ENCODE measurements at regions of chr5 and their contacts with region 1.

Region 1: DNA sequence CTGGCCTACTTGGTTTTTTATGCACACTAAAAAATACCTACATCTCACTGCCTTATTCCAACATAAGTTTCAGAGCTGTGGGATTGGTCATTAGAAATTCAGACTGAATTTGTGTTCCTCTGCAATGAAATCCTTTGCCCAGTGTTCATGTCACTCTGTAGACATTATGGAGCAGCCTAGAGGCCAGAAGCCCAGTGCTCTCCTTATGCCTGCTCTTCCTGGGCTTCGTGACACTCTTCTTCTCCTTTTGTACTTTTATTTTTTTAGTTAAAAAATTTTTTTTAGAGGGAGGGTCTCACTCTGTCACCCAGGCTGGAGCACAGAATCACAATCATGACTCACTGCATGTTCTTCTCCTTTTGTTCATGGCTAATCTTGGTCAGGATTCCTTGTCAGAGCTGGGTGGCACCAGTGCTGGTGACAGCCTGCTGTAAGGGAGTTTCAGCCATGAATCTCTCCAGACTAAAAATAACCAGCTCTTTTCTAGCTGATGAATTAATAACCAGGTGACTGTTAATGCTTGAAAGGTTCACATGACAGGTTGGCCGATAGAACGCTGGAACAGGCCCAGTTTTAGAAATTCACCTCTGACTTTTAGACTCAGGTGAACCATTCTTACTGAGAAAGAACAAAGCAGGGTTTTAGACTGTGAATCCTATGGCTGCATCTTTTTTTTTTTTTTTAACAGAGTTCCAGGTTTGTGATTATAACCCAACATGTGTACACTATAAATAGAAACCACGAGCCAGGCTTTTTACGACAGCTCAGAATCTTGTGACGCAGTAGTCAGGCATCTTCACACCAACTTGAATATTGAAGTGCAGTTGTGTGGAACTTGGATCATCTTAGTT is 34.1 kb upstream of the C5orf47 start:
- DNase-seq: no peak
- H3K4me3 ChIP-seq: no peak overlapping the region
- H3K27ac ChIP-seq: peak overlapping the region; percentile 88
- H3K4me1 ChIP-seq: peaks cover 83% of the 10 kb centered on the region
- H3K27me3 ChIP-seq: no peaks in the 10 kb centered on the region
- CTCF ChIP-seq: no peak

Region 2: DNA sequence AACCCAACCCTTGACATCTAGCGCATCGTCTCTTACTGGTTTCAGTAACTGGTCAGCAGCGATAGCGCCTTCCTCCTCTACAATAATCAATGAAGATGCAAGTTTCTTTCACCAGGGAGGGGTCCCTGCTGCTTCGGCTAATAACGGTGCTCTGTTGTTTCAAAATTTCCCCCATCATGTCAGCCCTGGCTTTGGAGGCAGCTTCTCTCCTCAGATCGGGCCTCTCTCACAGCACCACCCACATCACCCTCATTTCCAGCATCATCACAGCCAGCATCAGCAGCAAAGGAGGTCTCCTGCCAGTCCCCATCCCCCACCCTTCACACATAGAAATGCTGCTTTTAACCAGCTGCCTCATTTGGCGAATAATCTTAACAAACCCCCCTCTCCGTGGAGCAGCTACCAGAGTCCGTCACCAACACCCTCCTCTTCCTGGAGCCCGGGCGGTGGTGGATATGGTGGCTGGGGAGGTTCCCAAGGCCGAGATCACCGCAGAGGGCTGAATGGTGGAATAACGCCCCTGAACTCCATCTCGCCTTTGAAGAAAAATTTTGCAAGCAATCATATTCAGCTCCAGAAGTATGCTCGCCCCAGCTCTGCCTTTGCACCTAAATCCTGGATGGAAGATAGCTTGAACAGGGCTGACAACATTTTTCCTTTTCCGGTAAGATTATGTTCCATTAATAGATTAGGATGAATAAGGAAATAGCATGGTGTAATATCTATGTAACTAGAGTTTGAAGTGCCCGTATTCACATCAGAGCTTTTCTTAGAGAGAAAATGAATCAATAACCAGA is 64.5 kb before region 1 on chr5:
- intact Hi-C with region 1: loop called (anchors 10 kb)
- DNase-seq: peak; percentile 38
- H3K4me3 ChIP-seq: peak overlapping the region; percentile 90
- H3K27ac ChIP-seq: peak overlapping the region; percentile 91
- H3K4me1 ChIP-seq: peaks cover 76% of the 10 kb centered on the region
- H3K27me3 ChIP-seq: no peaks in the 10 kb centered on the region
- CTCF ChIP-seq: no peak

Region 3: DNA sequence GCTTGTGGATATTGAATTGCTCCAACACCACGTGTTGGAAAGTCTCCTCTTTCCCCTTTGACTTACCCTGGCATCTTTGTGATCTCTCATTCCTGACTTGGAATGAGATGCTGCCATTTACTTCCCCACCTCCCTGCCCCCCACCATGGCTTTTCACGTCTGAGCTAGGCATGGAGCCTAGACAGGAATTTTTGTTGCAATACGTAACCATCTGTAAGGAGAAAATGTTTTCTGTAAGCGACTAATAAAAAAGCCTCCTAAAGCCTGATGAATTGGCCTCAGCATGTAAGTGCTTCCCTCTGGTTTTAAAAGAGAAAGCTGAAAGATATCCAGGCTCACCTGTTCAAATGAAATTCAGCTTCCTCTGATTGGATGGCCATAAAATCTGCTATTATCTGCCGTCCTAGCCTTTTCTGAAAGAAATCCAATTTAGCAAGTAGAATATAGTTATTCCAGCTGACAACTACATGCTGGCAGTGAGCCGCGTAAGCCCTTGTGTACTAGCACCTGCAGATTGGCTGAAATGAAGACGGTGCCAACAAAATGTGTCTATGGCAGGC is 290.7 kb after region 1 on chr5:
- intact Hi-C with region 1: no loop called
- DNase-seq: no peak
- H3K4me3 ChIP-seq: no peak overlapping the region
- H3K27ac ChIP-seq: no peak overlapping the region
- H3K4me1 ChIP-seq: no peaks in the 10 kb centered on the region
- H3K27me3 ChIP-seq: peaks cover 3% of the 10 kb centered on the region
- CTCF ChIP-seq: no peak